ENCODE measurements at regions of chr11 and their contacts with region 1.

Region 1: GRCh38 chr11:6443269-6444003 is 2.6 kb upstream of the HPX start:
- DNase-seq: peak in 1 of 2 experiments; percentile 77
- H3K4me3 ChIP-seq: no peak overlapping the region
- H3K27ac ChIP-seq: no peak overlapping the region
- H3K4me1 ChIP-seq: peaks cover 0 to 4% (median 0%) of the 10 kb centered on the region in 4 experiments; a peak in 2 of 7 replicates
- H3K27me3 ChIP-seq: no peaks in the 10 kb centered on the region
- CTCF ChIP-seq: peak; percentile 79 to 95 (median 92)
- EP300 ChIP-seq: no peak
- POLR2A ChIP-seq: no peak
- RAD21 ChIP-seq: peak; percentile 81 to 82

Region 2: DNA sequence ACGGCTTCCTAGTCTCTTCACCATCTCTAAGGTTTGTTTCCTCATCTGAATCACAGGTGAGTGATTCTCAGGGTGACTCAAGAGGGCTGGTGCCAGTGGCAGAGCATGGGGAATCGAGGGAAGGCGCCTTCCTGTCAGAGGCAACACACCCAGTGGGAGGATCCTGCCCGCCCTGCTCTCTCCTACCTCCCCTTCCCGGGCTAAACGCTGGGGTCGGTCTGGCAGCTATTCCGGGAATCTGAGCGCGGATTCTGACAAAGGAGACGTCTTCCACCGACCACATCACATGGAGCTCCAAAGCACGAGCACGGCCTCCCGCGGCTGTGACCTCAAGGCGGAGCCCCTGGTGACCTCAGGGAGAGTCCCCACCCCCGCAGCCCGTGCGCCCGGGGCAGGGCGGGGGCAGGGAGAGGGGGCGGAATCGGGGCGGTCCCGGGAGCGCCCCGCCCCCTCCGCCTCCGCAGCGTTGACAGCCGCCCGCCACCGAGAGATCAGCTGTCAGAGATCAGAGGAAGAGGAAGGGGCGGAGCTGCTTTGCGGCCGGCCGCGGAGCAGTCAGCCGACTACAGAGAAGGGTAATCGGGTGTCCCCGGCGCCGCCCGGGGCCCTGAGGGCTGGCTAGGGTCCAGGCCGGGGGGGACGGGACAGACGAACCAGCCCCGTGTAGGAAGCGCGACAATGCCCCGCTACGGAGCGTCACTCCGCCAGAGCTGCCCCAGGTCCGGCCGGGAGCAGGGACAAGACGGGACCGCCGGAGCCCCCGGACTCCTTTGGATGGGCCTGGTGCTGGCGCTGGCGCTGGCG is 53.3 kb before region 1 on chr11 and contains the start of gene SMPD1:
- CTCF ChIA-PET with region 1: interaction called, 585 read pairs
- POLR2A ChIA-PET with region 1: no interaction called
- DNase-seq: peak; percentile 57 to 88
- H3K4me3 ChIP-seq: peak within 1 kb of the TSS; percentile 51 to 78 (median 62)
- H3K27ac ChIP-seq: no peak within 1 kb of the TSS; the same call in 1 of the 2 replicates
- H3K4me1 ChIP-seq: peaks cover 0 to 12% (median 9%) of the 10 kb centered on the region in 4 experiments; a peak in 6 of 7 replicates
- H3K27me3 ChIP-seq: peaks cover 2 to 8% (median 4%) of the 10 kb centered on the region in 4 experiments
- CTCF ChIP-seq: no peak
- EP300 ChIP-seq: no peak
- POLR2A ChIP-seq: 0 out of 3 replicates have a peak, but pooled peaks of 1 of the 2 experiments have one; percentile 26
- RAD21 ChIP-seq: no peak; a peak in 1 of 4 replicates
- total RNA-seq, gene SMPD1: 1.9 and 3.1 TPM in 2 replicates

Region 3: DNA sequence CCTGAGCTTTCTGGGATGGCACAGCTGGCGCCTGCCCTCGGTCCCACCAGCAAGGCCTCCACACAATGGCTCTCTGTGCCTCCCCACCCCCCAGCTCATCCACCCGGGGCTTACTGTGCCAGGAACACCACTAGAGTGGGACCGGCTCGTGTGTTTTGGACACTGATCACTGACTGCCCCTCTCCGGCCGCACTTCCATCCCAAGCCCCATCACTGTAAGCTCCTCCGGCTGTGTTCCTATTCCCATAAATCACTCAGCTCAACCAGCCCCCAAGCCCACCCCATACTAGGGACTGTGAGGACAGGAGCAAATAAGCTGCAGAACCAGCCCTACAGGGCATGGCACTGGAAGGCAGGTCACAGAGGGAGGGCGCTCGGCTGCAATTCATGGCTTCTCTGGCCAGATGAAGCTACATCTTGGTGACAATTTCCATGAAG is 31.8 kb before region 1 on chr11:
- CTCF ChIA-PET with region 1: interaction called, 79 read pairs
- POLR2A ChIA-PET with region 1: no interaction called
- DNase-seq: no peak
- H3K4me3 ChIP-seq: no peak overlapping the region
- H3K27ac ChIP-seq: no peak overlapping the region
- H3K4me1 ChIP-seq: no peaks in the 10 kb centered on the region
- H3K27me3 ChIP-seq: no peaks in the 10 kb centered on the region
- CTCF ChIP-seq: no peak
- EP300 ChIP-seq: no peak
- POLR2A ChIP-seq: no peak
- RAD21 ChIP-seq: no peak

Region 4: DNA sequence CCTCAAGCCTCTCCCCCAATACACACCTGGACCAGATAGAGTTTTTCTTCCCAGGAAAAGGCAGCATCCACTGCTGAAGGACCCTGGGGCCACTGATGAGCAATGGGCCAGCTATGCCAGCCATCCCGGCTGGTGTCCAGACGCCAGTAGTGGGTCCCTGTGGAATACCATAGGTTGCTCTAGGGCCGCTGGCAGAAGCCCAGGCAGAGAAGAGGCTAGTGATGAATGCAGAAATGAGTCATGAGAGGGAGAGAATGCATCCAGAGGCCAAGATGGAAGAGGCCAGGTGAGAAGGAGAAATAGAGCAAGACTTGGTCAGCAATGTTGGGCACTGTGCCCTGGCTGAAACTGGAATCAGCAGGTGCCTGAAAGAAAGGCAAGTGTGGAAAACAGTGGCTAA is 11.6 kb before region 1 on chr11:
- CTCF ChIA-PET with region 1: interaction called, 179 read pairs
- POLR2A ChIA-PET with region 1: interaction called, 7 read pairs
- DNase-seq: no peak
- H3K4me3 ChIP-seq: no peak overlapping the region
- H3K27ac ChIP-seq: no peak overlapping the region
- H3K4me1 ChIP-seq: peaks cover 0 to 3% (median 1%) of the 10 kb centered on the region in 4 experiments; a peak in 2 of 7 replicates
- H3K27me3 ChIP-seq: 0 out of 7 replicates have a peak, but pooled peaks cover 0 to 2% (median 0%) of the 10 kb centered on the region in 4 experiments
- CTCF ChIP-seq: no peak
- EP300 ChIP-seq: no peak
- POLR2A ChIP-seq: no peak
- RAD21 ChIP-seq: no peak

Region 5: GRCh38 chr11:6473481-6474422 is 30.3 kb after region 1 on chr11 and contains the start of gene TRIM3:
- CTCF ChIA-PET with region 1: interaction called, 69 read pairs
- POLR2A ChIA-PET with region 1: interaction called, 4 read pairs
- DNase-seq: peak; percentile 46 to 88
- H3K4me3 ChIP-seq: peak within 1 kb of the TSS; percentile 73 to 97 (median 80)
- H3K27ac ChIP-seq: no peak within 1 kb of the TSS; the same call in 1 of the 2 replicates
- H3K4me1 ChIP-seq: peaks cover 9 to 20% (median 15%) of the 10 kb centered on the region in 4 experiments
- H3K27me3 ChIP-seq: no peaks in the 10 kb centered on the region; a peak in 1 of 7 replicates
- CTCF ChIP-seq: peak; percentile 9 to 19 (median 19); a peak in 3 of 4 replicates
- EP300 ChIP-seq: 0 out of 3 replicates have a peak, but pooled peaks of 1 of the 2 experiments have one; percentile 6
- POLR2A ChIP-seq: 0 out of 3 replicates have a peak, but pooled peaks of 1 of the 2 experiments have one; percentile 21
- RAD21 ChIP-seq: no peak; a peak in 1 of 4 replicates
- total RNA-seq, gene TRIM3: 14.3 and 15.7 TPM in 2 replicates

Region 6: DNA sequence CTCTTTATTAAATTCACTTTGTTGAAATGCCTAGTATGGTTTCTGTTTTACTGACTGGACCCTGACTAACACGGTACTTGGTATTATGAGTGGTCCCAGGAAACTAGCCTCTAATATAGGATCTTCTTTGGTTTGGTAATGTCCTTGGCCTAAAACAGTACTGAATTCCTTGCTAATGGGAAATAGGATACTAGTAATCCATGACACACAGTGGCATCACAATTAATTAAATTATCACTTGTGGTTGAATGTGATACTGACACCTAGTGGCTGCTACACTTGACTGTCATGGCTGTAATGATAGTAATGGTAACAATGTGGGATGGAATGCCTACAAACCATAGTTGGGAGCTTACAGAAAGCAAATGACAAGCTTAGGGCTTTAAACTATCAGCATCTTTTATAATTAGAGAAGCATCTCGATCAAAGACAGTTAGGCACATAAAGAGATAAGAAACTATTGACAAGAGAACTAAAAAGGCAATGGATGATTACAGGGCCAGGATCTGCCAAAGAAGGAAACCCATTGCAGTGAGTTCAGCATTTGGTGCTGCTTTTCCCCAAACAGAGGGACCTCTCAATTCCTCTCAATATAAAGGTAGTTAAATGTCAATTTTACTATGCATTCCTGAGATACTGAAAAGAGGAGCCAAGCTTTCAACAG is 62.3 kb after region 1 on chr11:
- CTCF ChIA-PET with region 1: interaction called, 37 read pairs
- POLR2A ChIA-PET with region 1: interaction called, 3 read pairs
- DNase-seq: no peak
- H3K4me3 ChIP-seq: no peak overlapping the region
- H3K27ac ChIP-seq: no peak overlapping the region
- H3K4me1 ChIP-seq: no peaks in the 10 kb centered on the region
- H3K27me3 ChIP-seq: no peaks in the 10 kb centered on the region
- CTCF ChIP-seq: peak in 2 of 3 experiments; percentile 46 to 86; a peak in 2 of 4 replicates
- EP300 ChIP-seq: no peak
- POLR2A ChIP-seq: no peak
- RAD21 ChIP-seq: peak; percentile 51 to 63